Cardiac septum (tissue), 1 donor: ENCODE measurements at regions of chr15 and their contacts with region 1.

Region 1: DNA sequence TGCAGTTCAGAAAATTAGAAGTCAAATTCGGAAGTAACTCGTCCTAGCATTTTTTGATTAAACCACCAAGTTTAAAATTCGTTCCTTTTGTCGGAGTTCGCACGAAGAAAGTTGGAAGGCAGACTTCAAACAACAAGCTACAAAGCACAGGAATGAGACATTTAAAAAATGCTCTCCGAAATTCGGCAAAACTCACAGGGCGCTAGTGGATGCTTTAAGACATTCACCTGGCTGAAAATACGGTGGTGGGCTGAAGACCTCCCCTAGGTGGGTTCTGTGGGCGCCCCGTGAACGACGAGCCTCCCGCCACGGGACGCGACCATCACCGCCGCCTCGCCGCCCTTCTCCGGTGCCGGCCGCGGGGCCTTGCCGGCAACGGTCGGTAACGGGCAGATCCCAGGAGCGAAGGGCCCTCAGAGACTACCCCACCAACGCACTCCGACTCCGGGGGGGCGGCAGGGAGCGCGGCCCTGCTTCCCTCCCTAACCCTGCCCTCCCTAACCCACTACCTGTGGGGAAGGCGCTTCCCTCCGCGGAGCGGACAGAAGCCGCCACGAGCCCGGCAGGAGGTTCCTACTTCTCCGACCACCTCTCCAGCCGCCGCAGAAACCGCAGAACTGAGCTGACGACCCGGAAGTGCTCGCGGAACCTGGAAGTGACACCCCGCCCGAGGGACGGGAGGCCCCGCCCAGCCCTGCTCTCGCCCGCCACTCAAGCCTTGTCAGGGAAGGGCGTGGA is at the start of gene GTF2A2:
- DNase-seq: peak; percentile 98
- total RNA-seq, gene GTF2A2: 105 TPM

Region 2: GRCh38 chr15:59678620-59679019 is 21.6 kb after region 1 on chr15:
- intact Hi-C with region 1: no loop called
- DNase-seq: no peak

Region 3: DNA sequence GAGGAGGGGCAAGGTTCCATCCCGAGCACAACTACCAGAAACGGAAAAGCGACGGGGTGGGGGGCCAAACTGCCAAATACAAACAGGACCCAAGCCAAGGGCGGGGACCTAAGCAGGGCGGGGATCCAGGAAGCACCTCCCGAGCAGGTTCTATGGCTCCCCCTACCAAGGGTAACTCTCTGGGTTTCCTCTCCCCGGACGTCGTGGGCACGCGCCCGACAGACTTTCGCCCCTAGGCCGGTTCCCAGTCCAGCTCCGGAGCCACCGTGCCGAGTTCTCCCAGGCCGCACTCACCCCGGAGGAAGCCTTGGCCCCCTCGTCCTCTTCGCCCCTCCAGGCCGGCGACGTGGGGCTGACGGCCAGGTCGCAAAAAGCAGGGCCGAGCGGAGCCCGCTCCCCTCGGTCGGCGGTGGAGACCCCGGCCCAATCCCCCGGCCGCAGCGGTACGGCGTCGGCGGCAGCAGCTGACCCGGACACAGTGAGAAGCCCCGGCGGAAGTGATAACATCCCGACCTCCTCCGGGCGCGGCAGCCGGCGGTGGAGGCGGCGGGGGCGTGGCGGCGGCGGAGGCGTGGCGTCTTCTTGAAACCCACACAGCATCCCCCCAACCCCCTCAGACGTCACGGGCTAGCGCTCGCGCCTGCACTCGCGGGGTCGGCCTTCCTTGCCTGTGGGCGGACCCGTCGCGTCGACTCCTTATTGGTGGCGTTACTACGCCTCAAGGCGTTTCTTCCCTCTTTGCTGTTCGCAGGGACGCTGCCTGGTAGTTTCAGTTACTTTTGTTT is 32.0 kb after region 1 on chr15 and contains the start of gene BNIP2:
- intact Hi-C with region 1: loop called (anchors 1 kb)
- DNase-seq: peak; percentile 99
- total RNA-seq, gene BNIP2: 87.4 TPM